ENCODE measurements at regions of chr4 and their contacts with region 1.

Region 1: GRCh38 chr4:112029771-112030171 is 115.5 kb upstream of the FAM241A start:
- DNase-seq: no peak
- H3K4me3 ChIP-seq: no peak overlapping the region
- H3K27ac ChIP-seq: no peak overlapping the region
- H3K4me1 ChIP-seq: no peaks in the 10 kb centered on the region
- H3K27me3 ChIP-seq: peaks cover 16% of the 10 kb centered on the region
- CTCF ChIP-seq: no peak
- POLR2A ChIP-seq: no peak

Region 2: DNA sequence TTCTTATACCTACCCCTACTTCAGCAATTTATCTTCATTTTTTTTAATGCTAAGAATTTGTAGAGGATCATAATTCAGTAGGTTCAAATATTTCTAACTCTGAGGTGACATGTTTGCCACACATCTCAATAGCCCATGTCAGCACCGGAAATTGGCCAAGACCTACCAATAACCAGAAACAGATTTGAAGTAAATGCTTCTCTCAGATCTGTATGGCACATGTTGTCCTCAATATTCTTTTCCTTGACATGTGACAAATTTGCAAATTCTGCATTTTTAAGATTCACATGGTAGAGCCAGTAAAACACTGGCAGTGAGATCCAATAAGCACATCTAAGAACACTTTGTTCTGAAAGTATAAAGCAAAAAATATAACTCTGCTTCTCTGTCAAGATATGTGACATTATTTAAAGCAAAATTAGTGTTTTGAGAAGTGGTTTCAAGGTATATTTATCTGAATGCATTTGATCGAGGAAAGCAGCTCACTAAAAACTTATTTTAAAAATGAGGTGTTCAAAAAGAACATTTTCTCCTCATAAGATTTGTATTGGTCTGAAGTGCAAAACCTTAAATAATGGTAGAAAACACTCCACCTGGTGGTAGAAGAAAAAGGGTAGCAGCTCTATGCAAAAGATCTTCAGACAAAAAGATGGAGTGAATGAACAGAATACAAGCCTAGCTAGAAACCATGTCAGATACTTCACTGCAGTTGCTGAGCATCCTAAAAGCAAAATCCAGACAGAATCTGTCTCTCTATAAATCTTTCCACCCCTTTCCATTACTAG is 398.4 kb before region 1 on chr4:
- intact Hi-C with region 1: loop called in 1 of 2 experiments (anchors 10 kb)
- DNase-seq: no peak
- H3K4me3 ChIP-seq: no peak overlapping the region
- H3K27ac ChIP-seq: no peak overlapping the region
- H3K4me1 ChIP-seq: no peaks in the 10 kb centered on the region
- H3K27me3 ChIP-seq: peaks cover 9% of the 10 kb centered on the region
- CTCF ChIP-seq: peak in 3 of 6 experiments; percentile 3 to 24 (median 19)
- POLR2A ChIP-seq: no peak

Region 3: GRCh38 chr4:111960241-111960667 is 69.5 kb before region 1 on chr4:
- intact Hi-C with region 1: no loop called
- DNase-seq: no peak
- H3K4me3 ChIP-seq: no peak overlapping the region
- H3K27ac ChIP-seq: no peak overlapping the region
- H3K4me1 ChIP-seq: no peaks in the 10 kb centered on the region
- H3K27me3 ChIP-seq: no peaks in the 10 kb centered on the region
- CTCF ChIP-seq: no peak
- POLR2A ChIP-seq: no peak

Region 4: GRCh38 chr4:112119353-112119783 is 89.6 kb after region 1 on chr4:
- intact Hi-C with region 1: no loop called
- DNase-seq: no peak
- H3K4me3 ChIP-seq: no peak overlapping the region
- H3K27ac ChIP-seq: no peak overlapping the region
- H3K4me1 ChIP-seq: no peaks in the 10 kb centered on the region
- H3K27me3 ChIP-seq: no peaks in the 10 kb centered on the region
- CTCF ChIP-seq: no peak
- POLR2A ChIP-seq: no peak

Region 5: GRCh38 chr4:112532267-112532666 is 502.5 kb after region 1 on chr4:
- intact Hi-C with region 1: no loop called
- DNase-seq: no peak
- H3K4me3 ChIP-seq: no peak overlapping the region
- H3K27ac ChIP-seq: no peak overlapping the region
- H3K4me1 ChIP-seq: no peaks in the 10 kb centered on the region
- H3K27me3 ChIP-seq: no peaks in the 10 kb centered on the region
- CTCF ChIP-seq: no peak
- POLR2A ChIP-seq: no peak

Measured in adrenal gland (tissue), 19 donors.